GM18951 (cell line): ENCODE measurements at regions of chrX and their contacts with region 1.

Region 1: GRCh38 chrX:152941328-152942106 is 43.6 kb downstream of the ZNF185 start:
- POLR2A ChIP-seq: peak; percentile 75

Region 2: GRCh38 chrX:153307276-153308178 is 366.0 kb after region 1 on chrX:
- in situ Hi-C with region 1: no loop called
- POLR2A ChIP-seq: no peak

Region 3: GRCh38 chrX:153507484-153508178 is 566.1 kb after region 1 on chrX:
- in situ Hi-C with region 1: loop called (anchors 25 kb)
- POLR2A ChIP-seq: no peak